Activated CD4-positive, alpha-beta memory T cell treated with anti-CD3 and anti-CD28 coated beads for 36 hours (primary cell): ENCODE measurements at regions of chr16 and their contacts with region 1.

Region 1: DNA sequence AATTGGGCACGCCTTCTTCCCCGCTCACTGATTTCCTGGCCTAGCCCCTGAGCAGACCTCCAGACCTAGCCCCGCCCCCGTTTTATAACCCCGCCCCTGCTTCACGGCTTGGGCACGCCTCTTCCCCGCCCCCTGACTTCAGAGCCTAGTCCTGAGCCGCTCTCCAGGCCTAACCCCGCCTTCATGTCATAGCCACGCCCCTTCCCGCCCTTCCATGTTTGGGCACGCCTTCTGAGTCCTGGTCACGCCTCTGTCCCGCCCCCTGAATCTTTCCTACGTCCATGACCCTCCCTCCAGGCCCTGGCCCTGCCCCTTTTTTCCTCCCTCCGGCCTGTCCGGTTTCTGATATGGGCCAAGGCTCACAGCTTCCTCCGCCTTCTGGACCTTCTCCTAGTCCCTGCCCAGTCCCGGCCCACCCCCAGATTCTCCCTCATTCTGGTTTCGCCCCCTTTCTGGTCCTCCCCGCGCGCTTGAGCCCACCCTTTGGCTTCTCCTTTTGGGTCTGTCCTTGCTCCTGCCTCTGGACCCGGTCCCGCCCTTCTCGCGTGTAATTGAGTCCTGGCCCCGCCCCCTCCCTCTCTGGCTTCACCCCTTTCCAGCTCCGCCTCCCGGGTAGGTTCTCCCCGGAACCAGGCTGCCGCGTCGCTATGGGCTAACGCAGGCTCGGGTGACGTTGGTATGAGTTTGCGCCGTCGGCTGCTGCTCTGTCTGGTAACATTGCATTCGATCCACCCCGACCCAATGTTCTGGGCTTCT is 15.1 kb upstream of the EEF2K start:
- DNase-seq: peak; percentile 100
- H3K4me3 Mint-ChIP-seq: peak overlapping the region; percentile 91
- H3K27ac Mint-ChIP-seq: peak overlapping the region; percentile 99
- H3K4me1 Mint-ChIP-seq: peaks cover 58% of the 10 kb centered on the region
- H3K27me3 Mint-ChIP-seq: peaks cover 2% of the 10 kb centered on the region

Region 2: GRCh38 chr16:21501909-21502667 is 688.9 kb before region 1 on chr16:
- CTCF ChIA-PET with region 1: no interaction called
- POLR2A ChIA-PET with region 1: no interaction called
- intact Hi-C with region 1: loop called (anchors 10 kb)
- DNase-seq: peak; percentile 94
- H3K4me3 Mint-ChIP-seq: peak overlapping the region; percentile 82
- H3K27ac Mint-ChIP-seq: peak overlapping the region; percentile 90
- H3K4me1 Mint-ChIP-seq: peaks cover 18% of the 10 kb centered on the region
- H3K27me3 Mint-ChIP-seq: no peaks in the 10 kb centered on the region

Region 3: GRCh38 chr16:21952793-21953540 is 238.0 kb before region 1 on chr16 and contains the start of gene UQCRC2:
- CTCF ChIA-PET with region 1: interaction called, 14 read pairs
- POLR2A ChIA-PET with region 1: interaction called, 11 read pairs
- intact Hi-C with region 1: loop called (anchors 1 kb)
- DNase-seq: peak; percentile 93
- H3K4me3 Mint-ChIP-seq: peak within 1 kb of the TSS; percentile 93
- H3K27ac Mint-ChIP-seq: peak within 1 kb of the TSS; percentile 99
- H3K4me1 Mint-ChIP-seq: peaks cover 56% of the 10 kb centered on the region
- H3K27me3 Mint-ChIP-seq: no peaks in the 10 kb centered on the region
- total RNA-seq, gene UQCRC2: 260 to 273 TPM

Region 4: GRCh38 chr16:22001591-22001990 is 189.4 kb before region 1 on chr16:
- CTCF ChIA-PET with region 1: interaction called, 68 read pairs
- POLR2A ChIA-PET with region 1: interaction called, 6 read pairs
- intact Hi-C with region 1: loop called (anchors 1 kb)
- DNase-seq: no peak
- H3K4me3 Mint-ChIP-seq: no peak overlapping the region
- H3K27ac Mint-ChIP-seq: no peak overlapping the region
- H3K4me1 Mint-ChIP-seq: peaks cover 10% of the 10 kb centered on the region
- H3K27me3 Mint-ChIP-seq: no peaks in the 10 kb centered on the region

Region 5: GRCh38 chr16:22077700-22078313 is 113.1 kb before region 1 on chr16:
- CTCF ChIA-PET with region 1: interaction called, 69 read pairs
- POLR2A ChIA-PET with region 1: no interaction called
- intact Hi-C with region 1: loop called (anchors 1 kb)
- DNase-seq: peak; percentile 81
- H3K4me3 Mint-ChIP-seq: no peak overlapping the region
- H3K27ac Mint-ChIP-seq: no peak overlapping the region
- H3K4me1 Mint-ChIP-seq: no peaks in the 10 kb centered on the region
- H3K27me3 Mint-ChIP-seq: no peaks in the 10 kb centered on the region

Region 6: DNA sequence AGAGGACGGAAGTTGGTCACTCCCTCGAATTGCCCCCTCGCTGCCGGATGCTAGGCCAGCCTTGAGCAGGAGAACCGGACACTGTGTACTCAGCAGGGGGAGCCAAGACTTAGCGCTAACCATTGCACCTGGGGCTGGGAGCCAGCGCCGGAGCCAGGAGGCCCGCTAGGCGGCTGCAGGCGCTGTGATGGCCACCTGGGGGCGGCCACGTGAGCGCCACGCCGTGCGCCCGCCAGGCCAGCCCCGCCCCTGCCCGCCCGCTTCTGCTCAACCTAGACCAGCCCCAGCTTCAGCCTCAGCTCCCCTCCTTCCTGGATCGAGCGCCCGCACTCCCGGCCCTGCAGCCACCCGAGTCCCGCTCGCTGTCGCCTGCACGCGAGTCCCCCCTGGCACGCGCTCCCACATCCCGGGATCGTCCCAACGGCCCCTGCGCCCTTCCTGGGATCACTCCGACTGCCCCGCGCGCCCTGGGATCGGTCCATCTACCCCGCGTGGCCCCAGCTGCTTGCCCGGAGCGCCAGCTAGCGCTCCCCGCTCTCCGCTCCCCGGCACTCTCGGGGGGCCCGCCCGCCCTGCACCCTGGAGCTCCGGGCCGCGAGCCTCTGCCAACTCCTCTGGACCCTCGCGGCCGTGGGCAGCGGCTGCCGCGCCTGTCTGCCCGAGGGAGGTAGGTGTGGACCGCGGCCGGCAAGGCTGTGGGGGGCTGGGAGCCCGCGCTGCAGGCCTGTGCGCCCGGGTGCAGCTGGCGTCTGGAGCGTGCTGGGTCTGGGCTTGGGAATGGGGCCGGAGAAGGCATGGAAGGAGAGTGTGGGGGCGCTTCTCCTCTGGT is 15.3 kb after region 1 on chr16 and contains the start of gene EEF2K:
- CTCF ChIA-PET with region 1: interaction called, 24 read pairs
- POLR2A ChIA-PET with region 1: interaction called, 19 read pairs
- intact Hi-C with region 1: loop called (anchors 1 kb)
- DNase-seq: peak; percentile 93
- H3K4me3 Mint-ChIP-seq: peak within 1 kb of the TSS; percentile 95
- H3K27ac Mint-ChIP-seq: peak within 1 kb of the TSS; percentile 87
- H3K4me1 Mint-ChIP-seq: peaks cover 30% of the 10 kb centered on the region
- H3K27me3 Mint-ChIP-seq: no peaks in the 10 kb centered on the region
- total RNA-seq, gene EEF2K: 23.0 to 24.1 TPM

Region 7: GRCh38 chr16:22232277-22233042 is 41.5 kb after region 1 on chr16:
- CTCF ChIA-PET with region 1: no interaction called
- POLR2A ChIA-PET with region 1: no interaction called
- intact Hi-C with region 1: no loop called
- DNase-seq: peak; percentile 61
- H3K4me3 Mint-ChIP-seq: no peak overlapping the region
- H3K27ac Mint-ChIP-seq: no peak overlapping the region
- H3K4me1 Mint-ChIP-seq: peaks cover 10% of the 10 kb centered on the region
- H3K27me3 Mint-ChIP-seq: no peaks in the 10 kb centered on the region

Region 8: GRCh38 chr16:22374311-22375116 is 183.6 kb after region 1 on chr16 and contains the start of gene CDR2:
- CTCF ChIA-PET with region 1: no interaction called
- POLR2A ChIA-PET with region 1: interaction called, 4 read pairs
- intact Hi-C with region 1: loop called (anchors 5 kb)
- DNase-seq: peak; percentile 99
- H3K4me3 Mint-ChIP-seq: peak within 1 kb of the TSS; percentile 89
- H3K27ac Mint-ChIP-seq: peak within 1 kb of the TSS; percentile 93
- H3K4me1 Mint-ChIP-seq: peaks cover 37% of the 10 kb centered on the region
- H3K27me3 Mint-ChIP-seq: no peaks in the 10 kb centered on the region
- total RNA-seq, gene CDR2: 44.0 to 44.4 TPM